Panc1 (cell line): ENCODE measurements at regions of chr1 and their contacts with region 1.

Region 1: DNA sequence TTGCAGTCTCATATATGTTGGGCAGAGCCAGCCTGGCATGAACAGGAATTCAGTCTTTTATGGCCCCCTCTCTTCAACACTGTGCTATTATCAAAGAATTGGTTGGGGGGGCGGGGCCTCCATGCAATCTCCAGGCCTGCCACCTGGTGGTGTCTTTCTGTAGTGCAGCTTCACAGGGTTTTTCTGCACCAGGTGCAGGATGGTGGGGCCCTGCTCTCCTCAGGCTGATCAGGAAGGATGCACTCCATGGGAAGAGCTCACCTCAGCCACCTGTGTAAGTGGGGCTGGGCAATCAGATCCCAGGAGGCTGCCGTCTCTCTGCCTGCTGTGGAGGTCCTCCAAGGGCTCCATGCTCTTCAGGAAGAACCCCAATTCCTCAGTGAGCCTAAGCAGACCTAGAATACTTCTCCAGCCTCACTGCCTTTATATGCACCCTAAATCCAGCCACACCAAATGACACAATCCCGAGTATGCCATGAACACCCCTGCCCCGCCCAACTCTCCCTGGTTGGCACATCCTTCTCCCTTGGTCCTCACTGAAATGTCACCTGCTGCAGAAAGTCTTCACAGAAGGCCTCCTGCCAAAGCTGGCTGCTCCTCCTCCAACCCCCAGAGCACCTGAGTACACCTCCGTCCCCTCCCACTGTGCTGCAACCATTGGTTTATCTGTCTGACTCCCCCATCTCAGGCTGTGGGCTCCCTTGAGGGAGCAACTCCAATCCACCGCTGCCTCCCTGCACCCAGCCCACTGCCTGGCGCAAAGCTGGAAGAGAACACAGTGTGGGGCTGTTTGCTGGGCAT is 16.5 kb downstream of the STK40 start:
- DNase-seq: peak; percentile 47
- ATAC-seq: peak; percentile 54
- H3K4me3 ChIP-seq: no peak overlapping the region
- H3K27ac ChIP-seq: peak overlapping the region; percentile 61
- H3K4me1 ChIP-seq: peaks cover 44% of the 10 kb centered on the region
- H3K27me3 ChIP-seq: no peaks in the 10 kb centered on the region
- CTCF ChIP-seq: peak; percentile 95

Region 2: GRCh38 chr1:36157973-36158826 is 211.1 kb before region 1 on chr1:
- CTCF ChIA-PET with region 1: no interaction called
- POLR2A ChIA-PET with region 1: interaction called, 16 read pairs
- in situ Hi-C with region 1: no loop called
- intact Hi-C with region 1: no loop called
- DNase-seq: no peak
- ATAC-seq: no peak
- H3K4me3 ChIP-seq: peak overlapping the region; percentile 67 to 87
- H3K27ac ChIP-seq: peak overlapping the region; percentile 84
- H3K4me1 ChIP-seq: peaks cover 66% of the 10 kb centered on the region
- H3K27me3 ChIP-seq: no peaks in the 10 kb centered on the region
- CTCF ChIP-seq: no peak

Region 3: GRCh38 chr1:36397378-36398230 is 28.3 kb after region 1 on chr1 and contains the start of gene LSM10:
- CTCF ChIA-PET with region 1: interaction called, 15 read pairs
- POLR2A ChIA-PET with region 1: no interaction called
- in situ Hi-C with region 1: no loop called
- intact Hi-C with region 1: no loop called
- DNase-seq: peak; percentile 87
- ATAC-seq: peak; percentile 98
- H3K4me3 ChIP-seq: peak within 1 kb of the TSS; percentile 80 to 93
- H3K27ac ChIP-seq: peak within 1 kb of the TSS; percentile 79
- H3K4me1 ChIP-seq: no peaks in the 10 kb centered on the region
- H3K27me3 ChIP-seq: no peaks in the 10 kb centered on the region
- CTCF ChIP-seq: no peak
- total RNA-seq, gene LSM10: 53.7 TPM

Region 4: GRCh38 chr1:36411674-36412520 is 42.6 kb after region 1 on chr1:
- CTCF ChIA-PET with region 1: no interaction called
- POLR2A ChIA-PET with region 1: no interaction called
- in situ Hi-C with region 1: no loop called
- intact Hi-C with region 1: no loop called
- DNase-seq: no peak
- ATAC-seq: no peak
- H3K4me3 ChIP-seq: no peak overlapping the region
- H3K27ac ChIP-seq: no peak overlapping the region
- H3K4me1 ChIP-seq: no peaks in the 10 kb centered on the region
- H3K27me3 ChIP-seq: no peaks in the 10 kb centered on the region
- CTCF ChIP-seq: no peak

Region 5: DNA sequence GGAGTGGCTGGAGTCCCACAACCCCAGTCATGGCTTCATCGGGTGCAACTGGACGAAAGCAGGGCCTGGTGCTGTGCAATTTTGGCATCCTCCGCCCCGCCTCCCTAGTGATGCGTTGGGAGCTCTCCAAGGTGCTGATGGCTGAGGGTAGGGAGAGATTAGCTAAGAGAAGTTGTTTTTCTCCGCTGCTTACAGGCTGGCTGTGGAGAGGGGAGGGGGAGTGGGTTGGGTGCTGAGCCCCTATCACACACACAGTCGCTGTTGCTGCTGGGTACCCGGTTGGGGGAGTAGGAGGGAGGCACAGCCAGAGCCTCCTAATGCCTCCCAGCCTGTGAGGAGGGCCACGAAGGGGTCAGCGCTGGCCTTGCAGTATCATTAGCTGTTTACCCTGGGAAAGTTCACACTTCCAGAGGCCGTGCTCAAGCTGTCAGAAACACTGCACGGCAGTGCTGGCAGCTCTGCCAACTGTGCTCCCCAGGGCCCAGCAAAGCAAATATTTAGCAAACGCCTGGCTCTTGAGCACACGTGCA is 555.1 kb after region 1 on chr1:
- CTCF ChIA-PET with region 1: no interaction called
- POLR2A ChIA-PET with region 1: no interaction called
- in situ Hi-C with region 1: no loop called
- intact Hi-C with region 1: no loop called
- DNase-seq: no peak
- ATAC-seq: no peak
- H3K4me3 ChIP-seq: no peak overlapping the region
- H3K27ac ChIP-seq: no peak overlapping the region
- H3K4me1 ChIP-seq: no peaks in the 10 kb centered on the region
- H3K27me3 ChIP-seq: peaks cover 4% of the 10 kb centered on the region; the same call in 1 of the 2 replicates
- CTCF ChIP-seq: no peak